Common myeloid progenitor, CD34-positive (primary cell): ENCODE measurements at regions of chr16 and their contacts with region 1.

Region 1: DNA sequence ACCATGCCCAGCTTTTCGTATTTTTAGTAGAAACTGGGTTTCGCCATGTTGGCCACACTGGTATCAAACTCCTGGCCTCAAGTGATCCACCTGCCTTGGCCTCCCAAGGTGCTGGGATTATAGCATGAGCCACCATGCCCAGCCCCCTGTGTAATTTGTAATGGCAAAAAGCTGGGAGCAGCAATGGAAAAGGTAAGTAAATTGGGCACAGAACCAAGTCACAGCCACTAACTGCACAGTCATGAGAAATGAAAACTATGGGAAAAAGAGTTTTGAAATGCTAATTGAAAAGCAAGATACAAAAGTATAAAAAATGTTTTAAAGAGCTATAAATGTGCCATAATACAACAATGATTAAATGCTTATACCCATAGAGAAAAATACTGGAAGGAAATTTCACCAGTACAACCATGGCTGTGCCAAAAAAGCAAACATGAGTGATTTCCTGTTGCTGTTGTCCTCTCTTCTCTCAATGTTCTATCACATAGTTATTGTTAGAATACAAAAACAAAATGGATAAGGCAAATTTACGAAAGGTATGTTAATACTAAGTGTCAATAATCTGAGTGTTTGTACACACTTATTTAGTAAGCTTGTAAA is 6.2 kb downstream of the NTAN1 start:
- DNase-seq: no peak
- H3K4me3 ChIP-seq: no peak overlapping the region
- H3K27ac ChIP-seq: no peak overlapping the region
- H3K4me1 ChIP-seq: peaks cover 0 to 8% (median 2%) of the 10 kb centered on the region in 4 experiments
- H3K27me3 ChIP-seq: no peaks in the 10 kb centered on the region

Region 2: GRCh38 chr16:14549789-14550153 is 499.9 kb before region 1 on chr16:
- CTCF ChIA-PET with region 1: no interaction called
- POLR2A ChIA-PET with region 1: no interaction called
- DNase-seq: no peak
- H3K4me3 ChIP-seq: no peak overlapping the region
- H3K27ac ChIP-seq: no peak overlapping the region
- H3K4me1 ChIP-seq: peaks cover 0 to 2% (median 0%) of the 10 kb centered on the region in 4 experiments
- H3K27me3 ChIP-seq: no peaks in the 10 kb centered on the region

Region 3: DNA sequence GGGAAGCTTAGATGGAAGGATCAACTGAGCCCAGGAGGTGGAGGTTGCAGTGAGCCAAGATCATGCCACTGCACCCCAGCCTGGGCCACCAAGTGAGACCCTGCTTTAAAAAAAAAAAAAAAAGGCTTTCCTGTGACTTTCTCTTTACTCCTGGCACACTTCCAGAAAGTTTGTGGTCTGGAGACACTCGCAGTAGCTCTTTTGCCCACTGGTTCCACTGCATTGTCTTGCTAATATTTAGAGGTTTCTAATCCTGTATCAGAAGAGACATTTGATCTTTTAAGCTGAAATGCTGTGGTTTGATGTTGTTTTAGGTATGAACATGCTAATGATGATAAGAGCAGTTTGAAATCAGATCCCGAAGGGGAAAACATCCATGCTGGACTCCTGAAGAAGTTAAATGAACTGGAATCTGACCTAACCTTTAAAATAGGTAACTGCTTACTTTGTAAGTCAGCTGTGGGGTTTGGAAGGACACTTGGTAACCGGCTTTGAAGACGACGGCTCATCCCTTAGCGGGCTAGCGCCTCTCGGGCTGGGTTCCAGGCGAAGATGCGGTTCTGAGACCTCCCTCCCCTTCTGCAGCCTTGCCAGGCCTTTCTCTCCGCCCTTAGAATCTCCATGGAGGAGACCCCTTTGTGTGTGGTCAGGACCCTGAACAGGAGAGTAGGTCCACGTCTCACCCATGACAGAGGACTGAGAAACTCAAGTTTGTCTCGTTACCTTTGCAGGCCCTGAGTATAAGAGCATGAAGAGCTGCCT is 17.0 kb before region 1 on chr16:
- CTCF ChIA-PET with region 1: interaction called, 12 read pairs
- POLR2A ChIA-PET with region 1: no interaction called
- DNase-seq: peak; percentile 43 to 87 (median 82)
- H3K4me3 ChIP-seq: no peak overlapping the region
- H3K27ac ChIP-seq: no peak overlapping the region
- H3K4me1 ChIP-seq: peaks cover 3 to 27% (median 17%) of the 10 kb centered on the region in 4 experiments
- H3K27me3 ChIP-seq: no peaks in the 10 kb centered on the region

Region 4: DNA sequence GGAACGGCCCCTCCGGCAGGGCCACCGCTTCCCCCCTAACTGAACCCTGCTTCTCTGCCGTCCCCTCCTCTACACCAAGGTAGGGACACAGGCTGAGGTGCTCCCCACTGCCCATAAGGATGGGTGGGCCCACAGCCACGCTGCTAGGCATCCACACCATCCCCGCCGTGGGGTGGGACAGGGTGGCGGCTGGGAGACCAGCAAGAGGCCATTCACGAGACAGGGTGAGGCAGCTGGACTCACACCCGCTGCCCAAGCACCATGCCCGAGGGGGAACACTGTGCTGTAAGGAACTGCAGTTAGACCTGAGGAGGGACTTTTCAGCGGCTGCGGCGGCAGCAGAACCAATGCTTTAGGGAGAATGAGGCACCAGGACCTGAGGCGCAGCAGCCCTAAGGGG is 91.9 kb after region 1 on chr16:
- CTCF ChIA-PET with region 1: no interaction called
- POLR2A ChIA-PET with region 1: no interaction called
- DNase-seq: no peak
- H3K4me3 ChIP-seq: no peak overlapping the region
- H3K27ac ChIP-seq: no peak overlapping the region
- H3K4me1 ChIP-seq: peaks cover 0 to 35% (median 16%) of the 10 kb centered on the region in 4 experiments
- H3K27me3 ChIP-seq: no peaks in the 10 kb centered on the region